Activated CD8-positive, alpha-beta T cell treated with anti-CD3 and anti-CD28 coated beads for 36 hours (primary cell): ENCODE measurements at regions of chr11 and their contacts with region 1.

Region 1: DNA sequence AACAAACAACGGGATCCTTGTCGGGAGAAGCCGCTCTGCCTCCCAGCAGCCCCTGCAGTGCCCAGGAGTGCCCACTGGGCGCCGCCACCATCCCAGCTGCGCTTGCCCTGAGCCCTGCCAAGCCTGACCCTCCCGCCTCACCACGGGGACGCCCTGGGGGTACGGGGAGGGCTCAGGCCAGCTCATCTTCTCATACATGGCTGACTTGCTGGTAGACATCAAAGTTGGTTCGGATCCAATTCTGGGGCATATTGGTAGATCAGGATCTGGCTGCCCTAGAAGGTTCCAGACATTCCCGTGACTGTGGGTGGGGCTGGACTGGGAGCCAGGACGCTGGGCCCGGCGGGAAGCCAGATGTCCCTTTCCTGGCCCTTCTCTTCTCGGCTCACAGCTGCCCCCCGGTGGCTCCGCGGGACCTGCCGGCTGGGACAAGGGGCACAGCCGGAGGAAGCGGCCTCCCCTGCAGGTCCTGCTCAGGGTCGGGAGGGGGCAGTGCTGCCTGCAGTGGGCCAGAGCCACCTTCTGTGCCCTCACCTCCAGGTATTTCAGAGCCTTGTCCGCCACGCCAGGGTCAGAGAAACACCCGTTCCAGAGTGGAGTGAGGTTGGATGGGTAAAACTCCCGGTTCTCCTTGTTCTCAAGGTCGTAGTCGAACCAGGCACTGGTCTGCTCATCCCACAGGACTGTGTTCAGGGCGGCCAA is 10.6 kb upstream of the TREH start:
- DNase-seq: peak; percentile 94
- ATAC-seq: peak; percentile 92
- H3K4me3 Mint-ChIP-seq: peak overlapping the region; percentile 73
- H3K27ac Mint-ChIP-seq: peak overlapping the region; percentile 86
- H3K4me1 Mint-ChIP-seq: peaks cover 52% of the 10 kb centered on the region
- H3K27me3 Mint-ChIP-seq: peaks cover 4% of the 10 kb centered on the region
- CTCF ChIP-seq: peak; percentile 99

Region 2: GRCh38 chr11:118659314-118659952 is 30.6 kb before region 1 on chr11:
- CTCF ChIA-PET with region 1: interaction called, 11 read pairs
- POLR2A ChIA-PET with region 1: no interaction called
- intact Hi-C with region 1: no loop called
- DNase-seq: peak; percentile 97
- ATAC-seq: peak; percentile 100
- H3K4me3 Mint-ChIP-seq: no peak overlapping the region
- H3K27ac Mint-ChIP-seq: no peak overlapping the region
- H3K4me1 Mint-ChIP-seq: no peaks in the 10 kb centered on the region
- H3K27me3 Mint-ChIP-seq: no peaks in the 10 kb centered on the region
- CTCF ChIP-seq: peak; percentile 99

Region 3: GRCh38 chr11:118705111-118705741 is 15.2 kb after region 1 on chr11:
- CTCF ChIA-PET with region 1: interaction called, 21 read pairs
- POLR2A ChIA-PET with region 1: interaction called, 3 read pairs
- intact Hi-C with region 1: no loop called
- DNase-seq: peak; percentile 70
- ATAC-seq: peak; percentile 86
- H3K4me3 Mint-ChIP-seq: peak overlapping the region; percentile 41
- H3K27ac Mint-ChIP-seq: peak overlapping the region; percentile 82
- H3K4me1 Mint-ChIP-seq: peaks cover 28% of the 10 kb centered on the region
- H3K27me3 Mint-ChIP-seq: no peaks in the 10 kb centered on the region
- CTCF ChIP-seq: no peak

Region 4: DNA sequence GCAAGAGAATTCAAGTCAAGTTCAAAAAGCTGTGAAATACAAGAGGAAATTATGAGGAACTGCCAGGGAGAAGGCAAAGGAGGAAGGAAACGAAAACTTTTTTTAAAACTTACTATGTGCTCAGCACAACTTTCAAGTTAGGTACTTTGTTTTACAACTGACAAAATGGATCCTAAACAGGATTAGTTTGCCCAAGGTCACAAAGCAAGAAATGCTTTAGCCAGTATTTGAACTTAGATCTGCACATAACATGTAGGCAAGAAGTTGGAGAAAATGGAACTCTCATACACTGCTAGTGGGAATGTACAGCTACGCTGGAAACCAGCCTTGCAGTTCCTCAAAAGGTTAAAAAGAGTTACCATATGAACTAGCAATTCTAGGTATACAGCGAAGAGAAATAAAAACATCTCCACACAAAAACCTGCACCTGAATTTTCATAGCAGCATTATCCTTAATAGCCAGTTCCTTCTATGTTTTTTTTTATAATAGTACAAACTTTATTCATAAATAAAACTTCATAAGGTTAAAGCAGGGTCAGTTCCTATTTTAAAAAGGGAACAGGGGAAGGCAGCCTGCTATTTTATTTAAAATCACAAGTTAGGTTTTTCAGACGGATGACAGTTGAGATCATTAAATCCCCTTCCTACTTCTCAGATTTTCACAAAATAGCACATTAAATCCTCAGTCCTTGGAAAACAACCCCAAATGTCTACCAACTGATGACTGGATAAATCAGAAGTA is 81.7 kb after region 1 on chr11:
- CTCF ChIA-PET with region 1: interaction called, 31 read pairs
- POLR2A ChIA-PET with region 1: no interaction called
- intact Hi-C with region 1: no loop called
- DNase-seq: no peak
- ATAC-seq: no peak
- H3K4me3 Mint-ChIP-seq: no peak overlapping the region
- H3K27ac Mint-ChIP-seq: peak overlapping the region; percentile 89
- H3K4me1 Mint-ChIP-seq: peaks cover 74% of the 10 kb centered on the region
- H3K27me3 Mint-ChIP-seq: no peaks in the 10 kb centered on the region
- CTCF ChIP-seq: no peak

Region 5: DNA sequence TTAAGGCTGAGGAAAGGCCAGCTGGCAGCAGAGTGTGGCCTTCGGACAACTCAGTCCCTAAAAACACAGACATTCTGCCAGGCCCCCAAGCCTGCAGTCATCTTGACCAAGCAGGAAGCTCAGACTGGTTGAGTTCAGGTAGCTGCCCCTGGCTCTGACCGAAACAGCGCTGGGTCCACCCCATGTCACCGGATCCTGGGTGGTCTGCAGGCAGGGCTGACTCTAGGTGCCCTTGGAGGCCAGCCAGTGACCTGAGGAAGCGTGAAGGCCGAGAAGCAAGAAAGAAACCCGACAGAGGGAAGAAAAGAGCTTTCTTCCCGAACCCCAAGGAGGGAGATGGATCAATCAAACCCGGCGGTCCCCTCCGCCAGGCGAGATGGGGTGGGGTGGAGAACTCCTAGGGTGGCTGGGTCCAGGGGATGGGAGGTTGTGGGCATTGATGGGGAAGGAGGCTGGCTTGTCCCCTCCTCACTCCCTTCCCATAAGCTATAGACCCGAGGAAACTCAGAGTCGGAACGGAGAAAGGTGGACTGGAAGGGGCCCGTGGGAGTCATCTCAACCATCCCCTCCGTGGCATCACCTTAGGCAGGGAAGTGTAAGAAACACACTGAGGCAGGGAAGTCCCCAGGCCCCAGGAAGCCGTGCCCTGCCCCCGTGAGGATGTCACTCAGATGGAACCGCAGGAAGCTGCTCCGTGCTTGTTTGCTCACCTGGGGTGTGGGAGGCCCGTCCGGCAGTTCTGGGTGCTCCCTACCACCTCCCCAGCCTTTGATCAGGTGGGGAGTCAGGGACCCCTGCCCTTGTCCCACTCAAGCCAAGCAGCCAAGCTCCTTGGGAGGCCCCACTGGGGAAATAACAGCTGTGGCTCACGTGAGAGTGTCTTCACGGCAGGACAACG is 205.4 kb after region 1 on chr11:
- CTCF ChIA-PET with region 1: interaction called, 17 read pairs
- POLR2A ChIA-PET with region 1: interaction called, 4 read pairs
- intact Hi-C with region 1: no loop called
- DNase-seq: peak; percentile 88
- ATAC-seq: peak; percentile 86
- H3K4me3 Mint-ChIP-seq: peak overlapping the region; percentile 67
- H3K27ac Mint-ChIP-seq: peak overlapping the region; percentile 95
- H3K4me1 Mint-ChIP-seq: peaks cover 74% of the 10 kb centered on the region
- H3K27me3 Mint-ChIP-seq: no peaks in the 10 kb centered on the region
- CTCF ChIP-seq: no peak

Region 6: DNA sequence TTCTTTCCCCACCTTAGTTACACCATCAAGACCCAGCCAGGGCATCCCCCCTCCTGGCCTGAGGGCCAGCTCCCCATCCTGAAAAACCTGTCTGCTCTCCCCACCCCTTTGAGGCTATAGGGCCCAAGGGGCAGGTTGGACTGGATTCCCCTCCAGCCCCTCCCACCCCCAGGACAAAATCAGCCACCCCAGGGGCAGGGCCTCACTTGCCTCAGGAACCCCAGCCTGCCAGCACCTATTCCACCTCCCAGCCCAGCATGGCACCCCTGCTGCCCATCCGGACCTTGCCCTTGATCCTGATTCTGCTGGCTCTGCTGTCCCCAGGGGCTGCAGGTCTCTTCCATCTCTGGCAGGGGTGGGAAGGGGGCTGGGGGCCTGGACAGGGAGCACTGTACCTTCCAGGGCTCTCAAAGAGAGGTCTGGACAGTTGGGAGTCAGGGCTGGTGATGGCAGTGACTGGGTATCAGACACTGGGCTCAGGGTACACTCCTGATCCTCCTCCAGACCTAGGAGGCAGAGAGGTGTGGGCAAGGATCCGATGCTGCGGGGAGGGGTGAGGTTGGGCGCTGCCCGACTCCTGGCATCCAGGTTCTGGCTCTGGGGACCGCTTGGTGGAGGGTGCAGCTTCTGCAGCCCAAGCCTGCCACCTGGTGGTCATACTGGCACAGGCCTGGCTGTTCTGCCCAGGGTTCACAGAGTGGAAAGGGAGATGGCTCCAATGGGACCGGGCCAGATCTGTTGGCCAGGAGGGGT is 266.3 kb after region 1 on chr11 and contains the start of gene UPK2:
- CTCF ChIA-PET with region 1: interaction called, 23 read pairs
- POLR2A ChIA-PET with region 1: no interaction called
- intact Hi-C with region 1: no loop called
- DNase-seq: peak; percentile 93
- ATAC-seq: peak; percentile 99
- H3K4me3 Mint-ChIP-seq: no peak within 1 kb of the TSS
- H3K27ac Mint-ChIP-seq: no peak within 1 kb of the TSS
- H3K4me1 Mint-ChIP-seq: peaks cover 3% of the 10 kb centered on the region
- H3K27me3 Mint-ChIP-seq: no peaks in the 10 kb centered on the region
- CTCF ChIP-seq: peak; percentile 80
- total RNA-seq, gene UPK2: 1.5 to 2.2 TPM